BJ (cell line): ENCODE measurements at regions of chr18 and their contacts with region 1.

Region 1: GRCh38 chr18:49416511-49416910 is 43.9 kb downstream of the DYM start:
- DNase-seq: no peak
- H3K4me3 ChIP-seq: no peak overlapping the region
- H3K27me3 ChIP-seq: no peaks in the 10 kb centered on the region
- CTCF ChIP-seq: no peak

Region 2: GRCh38 chr18:49250816-49251388 is 165.6 kb before region 1 on chr18:
- CTCF ChIA-PET with region 1: interaction called, 13 read pairs
- POLR2A ChIA-PET with region 1: no interaction called
- DNase-seq: no peak
- H3K4me3 ChIP-seq: no peak overlapping the region
- H3K27me3 ChIP-seq: no peaks in the 10 kb centered on the region
- CTCF ChIP-seq: peak; percentile 55

Region 3: DNA sequence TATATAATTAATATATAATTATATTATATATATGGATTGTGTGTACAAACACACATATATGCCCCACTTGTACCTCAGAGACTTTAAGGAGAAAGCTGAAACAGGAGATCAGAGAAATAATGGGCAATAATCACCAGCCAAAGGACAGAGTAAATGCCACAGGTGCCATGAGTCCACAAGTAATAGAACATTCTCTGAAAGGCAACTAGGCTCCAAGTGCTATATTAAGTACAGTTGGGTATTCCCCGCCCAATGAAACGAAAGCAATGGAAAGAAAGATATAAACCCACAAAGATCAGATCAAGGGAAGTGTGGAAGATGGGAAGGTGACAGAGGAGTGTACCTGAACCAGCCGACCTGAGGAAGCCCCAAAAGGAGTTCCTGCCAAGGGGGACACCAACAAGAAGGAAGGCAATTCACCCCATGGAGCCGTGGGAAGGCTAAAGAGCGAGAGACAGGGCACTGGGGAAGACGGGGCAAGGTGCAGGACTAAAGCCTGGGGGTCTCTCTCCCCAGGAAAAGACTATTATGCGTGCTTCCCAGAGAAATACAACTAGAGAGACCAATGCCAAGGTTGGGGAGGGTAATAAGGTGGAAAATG is 24.9 kb after region 1 on chr18:
- CTCF ChIA-PET with region 1: no interaction called
- POLR2A ChIA-PET with region 1: no interaction called
- DNase-seq: no peak
- H3K4me3 ChIP-seq: no peak overlapping the region
- H3K27me3 ChIP-seq: no peaks in the 10 kb centered on the region
- CTCF ChIP-seq: no peak

Region 4: GRCh38 chr18:49500201-49500921 is 83.8 kb after region 1 on chr18:
- CTCF ChIA-PET with region 1: no interaction called
- POLR2A ChIA-PET with region 1: no interaction called
- DNase-seq: no peak
- H3K4me3 ChIP-seq: no peak overlapping the region
- H3K27me3 ChIP-seq: peaks cover 11% of the 10 kb centered on the region
- CTCF ChIP-seq: no peak

Region 5: GRCh38 chr18:49728542-49728941 is 312.0 kb after region 1 on chr18:
- CTCF ChIA-PET with region 1: no interaction called
- POLR2A ChIA-PET with region 1: no interaction called
- DNase-seq: no peak
- H3K4me3 ChIP-seq: no peak overlapping the region
- H3K27me3 ChIP-seq: no peaks in the 10 kb centered on the region
- CTCF ChIP-seq: peak; percentile 51

Region 6: GRCh38 chr18:49827996-49828395 is 411.5 kb after region 1 on chr18:
- CTCF ChIA-PET with region 1: no interaction called
- POLR2A ChIA-PET with region 1: no interaction called
- DNase-seq: no peak
- H3K4me3 ChIP-seq: no peak overlapping the region
- H3K27me3 ChIP-seq: no peaks in the 10 kb centered on the region
- CTCF ChIP-seq: no peak